Ovary (tissue), 10 donors: ENCODE measurements at regions of chr16 and their contacts with region 1.

Region 1: GRCh38 chr16:29815793-29816693 is at the start of gene PAGR1:
- DNase-seq: peak; percentile 98 to 99 (median 99)
- H3K4me3 ChIP-seq: peak within 1 kb of the TSS; percentile 95
- H3K27ac ChIP-seq: peak within 1 kb of the TSS; percentile 89 to 98
- H3K4me1 ChIP-seq: peaks cover 24% of the 10 kb centered on the region
- H3K27me3 ChIP-seq: no peaks in the 10 kb centered on the region
- CTCF ChIP-seq: peak; percentile 86 to 93 (median 92)
- EP300 ChIP-seq: no peak
- POLR2A ChIP-seq: peak; percentile 78
- total RNA-seq, gene PAGR1: 41.3 to 83.6 (median 66.6) TPM

Region 2: GRCh38 chr16:29757950-29758466 is 58.0 kb before region 1 on chr16:
- intact Hi-C with region 1: no loop called
- DNase-seq: peak; percentile 34 to 57 (median 53)
- H3K4me3 ChIP-seq: no peak overlapping the region
- H3K27ac ChIP-seq: peak overlapping the region in 1 of 2 donors; percentile 42
- H3K4me1 ChIP-seq: peaks cover 3% of the 10 kb centered on the region
- H3K27me3 ChIP-seq: no peaks in the 10 kb centered on the region
- CTCF ChIP-seq: no peak
- EP300 ChIP-seq: no peak
- POLR2A ChIP-seq: no peak

Region 3: DNA sequence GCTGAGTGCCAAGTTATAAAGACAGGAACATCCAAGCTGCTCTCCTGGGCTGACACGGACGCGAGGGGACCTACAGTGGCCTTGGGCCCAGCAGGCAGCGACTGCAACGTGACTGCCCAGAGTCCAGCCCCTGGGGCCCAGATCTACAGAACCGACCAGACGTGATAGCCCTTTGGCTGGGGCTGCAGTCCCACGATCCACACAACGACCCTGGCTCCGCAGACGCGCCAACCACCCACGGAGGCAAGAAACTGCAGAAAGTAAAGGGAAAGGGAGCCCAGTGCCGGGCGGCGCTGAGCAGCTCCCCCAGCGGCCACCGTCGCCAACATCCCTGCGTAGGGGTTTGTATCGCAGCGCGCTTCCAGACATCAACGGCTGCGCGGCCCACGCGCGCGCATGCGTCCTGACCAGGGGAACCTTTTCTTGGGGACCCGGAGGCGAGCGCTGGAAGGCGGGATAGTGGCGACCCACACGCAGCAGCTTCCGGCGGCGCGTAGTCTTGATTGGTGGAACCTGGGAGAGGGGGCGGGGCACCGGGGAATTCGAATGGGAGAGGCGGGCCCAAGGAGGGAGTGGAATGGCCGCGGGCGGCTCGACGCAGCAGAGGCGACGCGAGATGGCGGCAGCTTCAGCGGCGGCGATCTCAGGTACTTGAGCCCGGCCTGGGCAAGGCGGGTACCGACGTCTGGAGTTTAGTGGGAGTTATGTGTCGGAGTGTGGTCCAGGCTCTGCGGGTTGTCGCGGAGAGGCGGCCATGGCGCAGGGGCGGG is 25.7 kb before region 1 on chr16 and contains the start of gene KIF22:
- intact Hi-C with region 1: loop called in 1 of 4 experiments (anchors 2 kb)
- DNase-seq: peak; percentile 99 to 100 (median 99)
- H3K4me3 ChIP-seq: peak within 1 kb of the TSS; percentile 62
- H3K27ac ChIP-seq: peak within 1 kb of the TSS; percentile 44 to 78
- H3K4me1 ChIP-seq: peaks cover 14% of the 10 kb centered on the region
- H3K27me3 ChIP-seq: no peaks in the 10 kb centered on the region
- CTCF ChIP-seq: peak; percentile 74 to 96 (median 90)
- EP300 ChIP-seq: no peak
- POLR2A ChIP-seq: peak; percentile 48
- total RNA-seq, gene KIF22: 15.9 to 31.0 (median 20.7) TPM

Region 4: GRCh38 chr16:29831490-29831889 is 15.4 kb after region 1 on chr16:
- intact Hi-C with region 1: no loop called
- DNase-seq: no peak
- H3K4me3 ChIP-seq: no peak overlapping the region
- H3K27ac ChIP-seq: peak overlapping the region in 1 of 2 donors; percentile 28
- H3K4me1 ChIP-seq: peaks cover 5% of the 10 kb centered on the region
- H3K27me3 ChIP-seq: no peaks in the 10 kb centered on the region
- CTCF ChIP-seq: no peak
- EP300 ChIP-seq: no peak
- POLR2A ChIP-seq: no peak

Region 5: DNA sequence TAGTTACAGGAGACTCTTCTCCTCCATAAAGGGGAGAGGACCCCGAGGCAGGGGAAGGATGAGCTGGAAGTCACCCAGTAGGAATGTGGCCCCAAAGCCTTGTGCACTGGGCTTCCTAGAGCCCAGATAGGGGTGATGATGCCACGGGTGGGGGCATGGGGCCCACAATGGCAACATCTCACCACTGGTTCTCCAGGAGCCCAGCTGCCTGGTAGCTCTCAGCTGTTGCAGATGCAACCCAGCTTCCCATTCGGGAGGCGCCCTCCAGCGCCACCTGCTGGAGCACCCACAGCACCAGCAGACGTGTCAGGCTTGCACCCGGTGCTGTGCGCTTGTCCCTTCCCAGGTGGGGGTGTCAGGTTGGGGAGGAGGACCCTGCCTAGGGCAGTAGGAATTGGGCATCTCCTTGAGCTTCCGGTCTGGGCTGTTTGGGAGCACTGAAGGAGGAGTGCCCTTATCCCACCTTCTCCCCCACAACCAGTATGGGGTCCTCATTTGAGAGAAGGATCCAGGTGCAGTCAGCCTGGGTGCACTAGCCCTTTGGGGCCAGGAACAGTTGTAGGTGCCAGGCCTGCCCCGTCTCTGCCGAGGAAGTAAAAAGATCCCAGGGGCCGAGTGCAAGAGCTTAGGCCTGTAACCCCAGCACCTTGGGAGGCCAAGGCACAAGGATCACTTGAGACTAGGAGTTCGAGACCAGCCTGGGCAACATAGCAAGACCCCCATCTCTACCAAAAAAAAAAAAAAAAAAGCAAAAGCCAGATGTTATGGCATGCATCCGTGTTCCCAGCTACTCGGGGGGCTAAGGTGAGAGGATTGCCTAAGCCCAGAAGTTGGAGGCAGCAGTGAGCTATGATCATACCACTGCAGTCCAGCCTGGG is 32.6 kb after region 1 on chr16:
- intact Hi-C with region 1: loop called in 2 of 4 experiments (anchors 5 kb)
- DNase-seq: peak; percentile 79 to 88 (median 83)
- H3K4me3 ChIP-seq: no peak overlapping the region
- H3K27ac ChIP-seq: peak overlapping the region in 1 of 2 donors; percentile 64
- H3K4me1 ChIP-seq: peaks cover 5% of the 10 kb centered on the region
- H3K27me3 ChIP-seq: no peaks in the 10 kb centered on the region
- CTCF ChIP-seq: peak; percentile 78 to 88 (median 84)
- EP300 ChIP-seq: no peak
- POLR2A ChIP-seq: no peak